CD4-positive, alpha-beta memory T cell (primary cell): ENCODE measurements at regions of chr14 and their contacts with region 1.

Region 1: GRCh38 chr14:68506021-68506644 is 286.7 kb downstream of the ZFP36L1 start:
- DNase-seq: peak in 2 of 5 donors; percentile 9 to 39
- H3K4me3 ChIP-seq: peak overlapping the region; percentile 15 to 28
- H3K4me3 Mint-ChIP-seq: peak overlapping the region; percentile 63 to 86 (median 74)
- H3K27ac ChIP-seq: peak overlapping the region; percentile 27
- H3K27ac Mint-ChIP-seq: peak overlapping the region; percentile 60 to 93 (median 89)
- H3K4me1 ChIP-seq: peaks cover 45% of the 10 kb centered on the region
- H3K4me1 Mint-ChIP-seq: peaks cover 40 to 63% (median 52%) of the 10 kb centered on the region in 4 donors
- H3K27me3 ChIP-seq: no peaks in the 10 kb centered on the region
- H3K27me3 Mint-ChIP-seq: no peaks in the 10 kb centered on the region

Region 2: DNA sequence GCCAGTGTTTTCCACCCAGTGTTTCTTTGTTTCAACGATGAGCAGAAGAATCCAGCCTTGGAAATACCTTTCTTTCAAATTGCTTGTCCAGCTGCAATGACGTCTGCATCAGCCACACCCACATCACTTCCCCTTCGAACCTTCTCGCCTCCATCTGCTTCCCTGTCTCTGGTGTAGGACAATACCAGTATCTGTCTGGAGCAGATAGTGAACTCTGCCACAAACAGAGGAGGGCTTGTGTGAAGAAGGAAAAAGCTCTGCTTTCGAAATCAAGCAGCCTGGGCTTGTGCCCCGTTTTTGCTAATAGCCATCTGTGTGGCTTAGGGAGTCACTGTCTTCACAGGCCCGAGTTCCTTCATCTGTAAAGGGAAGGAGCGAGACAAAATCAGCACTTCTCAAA is 128.7 kb before region 1 on chr14:
- CTCF ChIA-PET with region 1: interaction called, 3 read pairs
- POLR2A ChIA-PET with region 1: interaction called, 17 read pairs
- intact Hi-C with region 1: no loop called
- DNase-seq: peak in 1 of 5 donors; percentile 10
- H3K4me3 ChIP-seq: no peak overlapping the region
- H3K4me3 Mint-ChIP-seq: peak overlapping the region in 7 of 8 donors; percentile 29 to 74 (median 42)
- H3K27ac ChIP-seq: peak overlapping the region; percentile 16
- H3K27ac Mint-ChIP-seq: peak overlapping the region in 6 of 7 donors; percentile 69 to 94 (median 87)
- H3K4me1 ChIP-seq: peaks cover 68% of the 10 kb centered on the region
- H3K4me1 Mint-ChIP-seq: peaks cover 32 to 70% (median 52%) of the 10 kb centered on the region in 4 donors
- H3K27me3 ChIP-seq: no peaks in the 10 kb centered on the region
- H3K27me3 Mint-ChIP-seq: no peaks in the 10 kb centered on the region

Region 3: DNA sequence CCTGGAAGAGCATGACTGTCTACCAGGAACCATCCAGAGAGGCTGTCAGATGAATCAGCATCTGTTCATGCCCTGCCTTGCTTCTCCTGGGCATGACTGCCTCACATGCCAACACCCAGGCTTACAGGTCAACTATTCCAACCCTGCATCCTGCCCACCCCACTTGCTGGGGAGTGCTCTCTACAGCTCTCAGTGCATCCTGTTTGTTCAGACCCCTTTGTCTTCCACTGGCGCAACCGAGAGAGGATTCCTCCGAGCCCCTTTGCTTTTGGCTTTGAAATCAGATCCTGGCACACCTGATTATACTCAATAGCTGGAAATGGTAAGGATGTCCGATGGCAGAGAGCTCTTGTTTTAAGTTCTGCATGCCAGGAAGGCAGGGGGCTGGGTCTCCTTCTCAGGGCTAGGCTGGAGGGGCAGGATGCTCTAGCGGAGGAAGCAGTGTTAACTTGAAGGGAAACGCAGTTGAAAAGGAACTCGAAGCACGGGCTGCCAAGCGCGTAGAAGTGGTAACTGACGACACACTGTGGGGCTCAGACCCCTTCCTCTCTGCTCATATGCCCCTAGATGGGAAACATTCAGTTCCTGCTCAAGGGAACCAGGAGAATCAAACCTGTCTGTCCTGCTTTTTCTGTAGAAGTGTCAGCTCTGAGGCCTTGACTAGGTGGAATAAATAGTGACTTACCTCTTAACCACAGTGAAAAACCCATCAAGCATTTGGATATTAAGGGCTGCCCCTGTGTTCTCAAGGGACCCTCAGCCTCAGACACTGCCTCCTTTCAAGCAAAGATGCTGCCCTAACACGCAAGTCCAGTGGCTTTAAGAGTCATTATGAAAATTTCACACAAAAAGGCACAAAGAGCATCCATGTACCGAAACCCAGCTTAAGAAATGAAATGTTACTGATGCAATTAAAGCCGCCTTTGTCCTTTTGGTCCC is 10.8 kb before region 1 on chr14:
- CTCF ChIA-PET with region 1: interaction called, 3 read pairs
- POLR2A ChIA-PET with region 1: interaction called, 12 read pairs
- intact Hi-C with region 1: no loop called
- DNase-seq: peak in 1 of 5 donors; percentile 22
- H3K4me3 ChIP-seq: no peak overlapping the region
- H3K4me3 Mint-ChIP-seq: peak overlapping the region in 1 of 8 donors; percentile 25
- H3K27ac ChIP-seq: no peak overlapping the region
- H3K27ac Mint-ChIP-seq: peak overlapping the region in 4 of 7 donors; percentile 14 to 42 (median 30)
- H3K4me1 ChIP-seq: no peaks in the 10 kb centered on the region
- H3K4me1 Mint-ChIP-seq: peaks cover 12 to 19% (median 16%) of the 10 kb centered on the region in 4 donors
- H3K27me3 ChIP-seq: no peaks in the 10 kb centered on the region
- H3K27me3 Mint-ChIP-seq: no peaks in the 10 kb centered on the region

Region 4: DNA sequence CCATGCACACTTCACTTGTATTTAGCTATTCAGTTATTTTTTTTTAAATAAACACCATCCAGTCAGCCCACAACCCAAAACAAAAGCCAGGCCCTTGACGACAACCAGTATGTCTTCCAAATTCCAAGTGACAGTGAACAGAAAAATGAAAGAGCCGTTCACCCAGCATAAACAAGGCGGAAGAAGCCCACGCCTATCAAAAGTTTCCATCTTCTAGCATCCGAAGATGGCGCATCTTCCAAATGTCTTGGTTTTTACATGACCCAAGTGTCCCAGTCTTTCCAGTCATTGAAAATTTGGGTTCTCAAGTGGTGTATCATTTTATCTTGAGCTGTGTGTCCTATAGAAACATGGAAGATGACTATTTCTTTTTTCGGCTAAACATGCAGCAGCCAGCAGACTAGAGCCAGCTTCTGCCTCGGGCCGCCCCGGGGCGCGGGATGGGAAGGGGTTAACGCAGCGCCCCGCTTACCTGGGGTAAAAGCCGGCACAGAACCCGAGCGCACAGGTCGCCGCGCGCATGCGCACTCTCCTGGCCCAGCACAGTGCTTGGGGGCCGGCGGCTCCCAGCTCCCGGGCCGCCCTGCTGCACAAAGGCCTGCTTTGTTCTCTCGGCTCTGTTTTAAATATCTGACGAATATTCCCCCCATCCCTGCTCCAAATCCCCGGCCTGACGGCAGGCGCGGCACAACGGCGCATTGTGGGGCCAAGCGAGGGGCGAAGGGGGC is 121.9 kb after region 1 on chr14:
- CTCF ChIA-PET with region 1: no interaction called
- POLR2A ChIA-PET with region 1: interaction called, 7 read pairs
- intact Hi-C with region 1: loop called (anchors 5 kb)
- DNase-seq: peak; percentile 34 to 60 (median 47)
- H3K4me3 ChIP-seq: peak overlapping the region in 1 of 2 donors; percentile 41
- H3K4me3 Mint-ChIP-seq: peak overlapping the region; percentile 74 to 88 (median 85)
- H3K27ac ChIP-seq: no peak overlapping the region
- H3K27ac Mint-ChIP-seq: peak overlapping the region; percentile 70 to 94 (median 81)
- H3K4me1 ChIP-seq: peaks cover 10% of the 10 kb centered on the region
- H3K4me1 Mint-ChIP-seq: peaks cover 8 to 25% (median 13%) of the 10 kb centered on the region in 4 donors
- H3K27me3 ChIP-seq: no peaks in the 10 kb centered on the region
- H3K27me3 Mint-ChIP-seq: no peaks in the 10 kb centered on the region

Region 5: GRCh38 chr14:68685419-68686204 is 179.5 kb after region 1 on chr14:
- CTCF ChIA-PET with region 1: interaction called, 3 read pairs
- POLR2A ChIA-PET with region 1: interaction called, 20 read pairs
- intact Hi-C with region 1: loop called (anchors 1 kb)
- DNase-seq: peak; percentile 84 to 97 (median 89)
- H3K4me3 ChIP-seq: peak overlapping the region in 1 of 2 donors; percentile 11
- H3K4me3 Mint-ChIP-seq: peak overlapping the region; percentile 49 to 85 (median 70)
- H3K27ac ChIP-seq: peak overlapping the region; percentile 70
- H3K27ac Mint-ChIP-seq: peak overlapping the region; percentile 93 to 98 (median 97)
- H3K4me1 ChIP-seq: peaks cover 58% of the 10 kb centered on the region
- H3K4me1 Mint-ChIP-seq: peaks cover 48 to 66% (median 60%) of the 10 kb centered on the region in 4 donors
- H3K27me3 ChIP-seq: no peaks in the 10 kb centered on the region
- H3K27me3 Mint-ChIP-seq: no peaks in the 10 kb centered on the region

Region 6: DNA sequence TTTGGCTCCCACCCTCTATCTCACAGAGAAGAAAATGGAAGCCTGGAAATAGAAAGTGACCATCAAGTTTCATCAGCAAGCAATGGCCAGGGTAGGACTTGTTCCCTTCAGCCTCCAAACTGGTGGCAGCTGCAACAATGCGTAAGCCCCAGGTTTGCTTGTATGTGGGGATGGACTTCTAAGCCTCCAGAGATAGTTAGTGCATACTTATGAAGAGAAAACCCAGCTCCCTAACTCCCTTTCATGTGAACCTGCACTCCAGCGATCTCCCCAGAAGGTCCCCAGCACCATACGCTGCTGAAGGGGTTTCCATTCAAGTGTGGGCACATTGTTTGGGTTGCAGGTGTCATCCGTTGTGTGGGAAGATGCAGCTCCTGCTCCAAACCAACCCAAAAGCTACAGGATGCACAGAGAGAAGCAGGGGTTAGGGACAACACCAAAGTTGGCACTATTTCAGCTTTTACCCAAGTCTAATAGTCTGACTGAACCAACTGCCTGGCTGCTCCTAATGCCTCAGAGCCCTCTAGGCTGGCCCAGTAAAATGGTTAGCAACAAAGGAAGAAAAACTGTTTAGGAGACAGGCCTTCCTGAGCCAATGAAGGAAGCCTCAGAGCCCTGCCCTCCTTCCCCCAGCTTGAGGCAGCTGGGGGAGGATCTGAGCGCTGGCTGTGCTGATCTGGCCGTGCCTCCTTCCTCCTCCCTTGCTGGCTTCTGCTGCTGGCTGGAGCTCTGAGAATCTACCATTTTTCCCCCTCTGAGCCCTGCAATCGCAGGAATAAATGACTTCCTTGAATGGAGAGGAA is 274.4 kb after region 1 on chr14:
- CTCF ChIA-PET with region 1: interaction called, 7 read pairs
- POLR2A ChIA-PET with region 1: interaction called, 235 read pairs
- intact Hi-C with region 1: loop called (anchors 2 kb)
- DNase-seq: peak in 4 of 5 donors; percentile 27 to 64 (median 38)
- H3K4me3 ChIP-seq: peak overlapping the region in 1 of 2 donors; percentile 49
- H3K4me3 Mint-ChIP-seq: peak overlapping the region; percentile 79 to 93 (median 85)
- H3K27ac ChIP-seq: peak overlapping the region; percentile 58
- H3K27ac Mint-ChIP-seq: peak overlapping the region; percentile 93 to 99 (median 97)
- H3K4me1 ChIP-seq: peaks cover 91% of the 10 kb centered on the region
- H3K4me1 Mint-ChIP-seq: peaks cover 60 to 98% (median 76%) of the 10 kb centered on the region in 4 donors
- H3K27me3 ChIP-seq: no peaks in the 10 kb centered on the region
- H3K27me3 Mint-ChIP-seq: no peaks in the 10 kb centered on the region